CD8-positive, alpha-beta memory T cell (primary cell): ENCODE measurements at regions of chr3 and their contacts with region 1.

Region 1: GRCh38 chr3:45929042-45929679 is 14.1 kb upstream of the CXCR6 start:
- DNase-seq: peak; percentile 50 to 75 (median 51)
- H3K4me3 ChIP-seq: no peak overlapping the region
- H3K4me3 Mint-ChIP-seq: peak overlapping the region in 1 of 7 donors; percentile 63
- H3K27ac ChIP-seq: no peak overlapping the region
- H3K27ac Mint-ChIP-seq: peak overlapping the region in 6 of 8 donors; percentile 28 to 92 (median 53)
- H3K4me1 ChIP-seq: peaks cover 3% of the 10 kb centered on the region
- H3K4me1 Mint-ChIP-seq: peaks cover 10 to 18% (median 15%) of the 10 kb centered on the region in 3 donors
- H3K27me3 ChIP-seq: no peaks in the 10 kb centered on the region
- H3K27me3 Mint-ChIP-seq: no peaks in the 10 kb centered on the region

Region 2: GRCh38 chr3:45748068-45748467 is 181.1 kb before region 1 on chr3:
- CTCF ChIA-PET with region 1: no interaction called
- POLR2A ChIA-PET with region 1: no interaction called
- DNase-seq: no peak
- H3K4me3 ChIP-seq: no peak overlapping the region
- H3K4me3 Mint-ChIP-seq: no peak overlapping the region
- H3K27ac ChIP-seq: no peak overlapping the region
- H3K27ac Mint-ChIP-seq: peak overlapping the region in 1 of 8 donors; percentile 72
- H3K4me1 ChIP-seq: no peaks in the 10 kb centered on the region
- H3K4me1 Mint-ChIP-seq: peaks cover 0 to 3% (median 0%) of the 10 kb centered on the region in 3 donors
- H3K27me3 ChIP-seq: no peaks in the 10 kb centered on the region
- H3K27me3 Mint-ChIP-seq: no peaks in the 10 kb centered on the region

Region 3: DNA sequence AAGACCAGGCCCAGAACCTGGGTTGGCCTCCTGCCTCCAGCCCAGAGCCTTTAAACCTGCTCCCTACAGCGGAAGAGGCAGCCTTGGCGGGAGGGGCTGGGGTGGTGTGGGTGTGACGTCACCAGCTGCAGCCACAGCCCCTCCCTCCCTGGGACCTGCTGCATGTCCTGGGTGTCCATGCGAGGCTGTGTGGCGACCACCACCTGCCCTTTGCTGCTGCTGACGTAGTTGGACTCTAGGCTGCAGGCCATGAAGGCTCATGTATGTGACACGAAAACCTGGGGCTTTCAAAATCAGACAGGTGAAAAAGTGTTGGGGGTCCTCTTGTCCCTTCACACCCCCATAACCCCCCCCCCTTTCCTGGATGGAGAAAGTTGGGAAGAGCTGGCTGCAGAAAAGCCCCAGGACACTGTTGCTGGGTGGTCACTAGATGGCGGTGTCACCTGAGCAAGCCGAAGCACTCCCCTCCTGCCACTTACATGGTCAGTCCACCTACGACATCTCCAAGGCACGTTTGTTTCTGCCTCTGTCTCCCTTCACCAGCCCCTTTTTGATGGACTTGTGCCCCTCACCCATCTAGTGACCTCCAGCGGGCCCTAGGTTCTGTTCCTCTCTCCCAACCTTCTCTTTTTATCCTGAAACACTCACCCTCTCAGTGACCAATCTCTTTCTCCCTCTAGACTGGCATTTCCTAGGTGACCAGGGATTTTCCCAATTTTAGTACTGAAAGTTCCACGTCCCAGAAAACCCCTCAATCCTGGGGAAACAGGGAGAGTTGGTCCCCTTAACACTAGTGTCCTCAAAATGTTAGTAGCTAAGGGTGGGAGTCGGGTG is 168.1 kb before region 1 on chr3:
- CTCF ChIA-PET with region 1: interaction called, 42 read pairs
- POLR2A ChIA-PET with region 1: no interaction called
- DNase-seq: peak; percentile 20 to 62 (median 27)
- H3K4me3 ChIP-seq: no peak overlapping the region
- H3K4me3 Mint-ChIP-seq: no peak overlapping the region
- H3K27ac ChIP-seq: no peak overlapping the region
- H3K27ac Mint-ChIP-seq: peak overlapping the region in 1 of 8 donors; percentile 17
- H3K4me1 ChIP-seq: no peaks in the 10 kb centered on the region
- H3K4me1 Mint-ChIP-seq: peaks cover 2 to 5% (median 4%) of the 10 kb centered on the region in 3 donors
- H3K27me3 ChIP-seq: no peaks in the 10 kb centered on the region
- H3K27me3 Mint-ChIP-seq: peaks cover 4 to 6% of the 10 kb centered on the region in 2 donors

Region 4: GRCh38 chr3:45841757-45842491 is 87.2 kb before region 1 on chr3 and contains the start of gene LZTFL1:
- CTCF ChIA-PET with region 1: interaction called, 11 read pairs
- POLR2A ChIA-PET with region 1: no interaction called
- DNase-seq: peak; percentile 74 to 95 (median 88)
- H3K4me3 ChIP-seq: peak within 1 kb of the TSS; percentile 78
- H3K4me3 Mint-ChIP-seq: peak within 1 kb of the TSS; percentile 91 to 98 (median 94)
- H3K27ac ChIP-seq: peak within 1 kb of the TSS; percentile 87
- H3K27ac Mint-ChIP-seq: peak within 1 kb of the TSS; percentile 87 to 98 (median 96)
- H3K4me1 ChIP-seq: peaks cover 15% of the 10 kb centered on the region
- H3K4me1 Mint-ChIP-seq: peaks cover 20 to 44% (median 21%) of the 10 kb centered on the region in 3 donors
- H3K27me3 ChIP-seq: no peaks in the 10 kb centered on the region
- H3K27me3 Mint-ChIP-seq: peaks cover 0 to 6% of the 10 kb centered on the region in 2 donors
- total RNA-seq, gene LZTFL1: 9.0 to 11.4 TPM

Region 5: DNA sequence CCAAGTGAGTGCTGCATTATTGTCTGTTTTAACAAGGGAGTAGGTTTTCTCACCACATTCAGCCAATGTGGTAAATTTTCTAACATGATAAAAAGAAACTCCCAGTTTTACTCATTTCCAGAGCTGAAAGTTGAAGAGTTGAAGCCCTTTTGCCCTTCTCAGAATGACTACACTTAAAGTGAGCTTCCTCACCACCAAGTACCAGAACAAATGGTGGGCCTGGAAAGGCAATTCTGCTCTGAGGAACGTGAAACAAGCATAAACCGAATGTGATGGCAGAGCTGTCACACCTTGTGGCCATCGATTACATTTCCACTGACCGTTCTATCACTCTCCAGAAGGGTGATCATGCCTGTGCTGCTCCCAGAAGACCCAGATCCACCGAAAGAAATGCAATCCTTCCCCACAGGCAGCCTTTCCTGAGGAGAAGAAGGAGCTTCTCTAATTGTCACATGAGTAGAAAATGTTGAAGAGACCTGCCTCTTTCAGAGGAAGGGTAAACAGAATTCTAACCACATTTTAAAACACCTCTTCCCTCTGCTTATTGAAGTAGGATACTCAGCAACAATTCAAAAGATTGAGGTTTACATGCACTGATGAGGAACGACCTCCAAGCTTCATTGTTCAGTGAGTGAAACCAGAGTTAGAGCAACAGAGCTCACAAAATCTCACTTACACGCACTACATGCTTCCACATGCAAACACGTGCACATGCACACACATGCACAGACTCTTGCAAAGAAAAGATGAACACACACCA is 64.2 kb before region 1 on chr3:
- CTCF ChIA-PET with region 1: no interaction called
- POLR2A ChIA-PET with region 1: no interaction called
- DNase-seq: peak in 2 of 5 donors; percentile 24 to 36
- H3K4me3 ChIP-seq: no peak overlapping the region
- H3K4me3 Mint-ChIP-seq: peak overlapping the region in 3 of 7 donors; percentile 10 to 56 (median 37)
- H3K27ac ChIP-seq: no peak overlapping the region
- H3K27ac Mint-ChIP-seq: peak overlapping the region in 2 of 8 donors; percentile 27 to 76
- H3K4me1 ChIP-seq: peaks cover 24% of the 10 kb centered on the region
- H3K4me1 Mint-ChIP-seq: peaks cover 22 to 77% (median 39%) of the 10 kb centered on the region in 3 donors
- H3K27me3 ChIP-seq: no peaks in the 10 kb centered on the region
- H3K27me3 Mint-ChIP-seq: peaks cover 11 to 12% of the 10 kb centered on the region in 2 donors

Region 6: GRCh38 chr3:45906681-45907407 is 22.3 kb before region 1 on chr3:
- CTCF ChIA-PET with region 1: interaction called, 11 read pairs
- POLR2A ChIA-PET with region 1: no interaction called
- DNase-seq: no peak
- H3K4me3 ChIP-seq: no peak overlapping the region
- H3K4me3 Mint-ChIP-seq: peak overlapping the region in 1 of 7 donors; percentile 27
- H3K27ac ChIP-seq: no peak overlapping the region
- H3K27ac Mint-ChIP-seq: peak overlapping the region in 2 of 8 donors; percentile 50 to 80
- H3K4me1 ChIP-seq: peaks cover 18% of the 10 kb centered on the region
- H3K4me1 Mint-ChIP-seq: peaks cover 36 to 73% (median 51%) of the 10 kb centered on the region in 3 donors
- H3K27me3 ChIP-seq: no peaks in the 10 kb centered on the region
- H3K27me3 Mint-ChIP-seq: peaks cover 0 to 4% of the 10 kb centered on the region in 2 donors